ENCODE measurements at regions of chr5 and their contacts with region 1.

Region 1: GRCh38 chr5:79133657-79134451 is 22.2 kb downstream of the BHMT start:
- DNase-seq: peak; percentile 66
- ATAC-seq: peak; percentile 58
- H3K4me3 ChIP-seq: peak overlapping the region in 1 of 5 experiments; percentile 0
- H3K4me3 Mint-ChIP-seq: no peak overlapping the region
- H3K27ac ChIP-seq: no peak overlapping the region
- H3K27ac Mint-ChIP-seq: no peak overlapping the region
- H3K4me1 ChIP-seq: peaks cover 7 to 10% of the 10 kb centered on the region in 2 donors
- H3K4me1 Mint-ChIP-seq: peaks cover 8% of the 10 kb centered on the region
- H3K27me3 ChIP-seq: peaks cover 0 to 3% (median 0%) of the 10 kb centered on the region in 4 experiments
- H3K27me3 Mint-ChIP-seq: peaks cover 8% of the 10 kb centered on the region
- CTCF ChIP-seq: peak; percentile 66

Region 2: DNA sequence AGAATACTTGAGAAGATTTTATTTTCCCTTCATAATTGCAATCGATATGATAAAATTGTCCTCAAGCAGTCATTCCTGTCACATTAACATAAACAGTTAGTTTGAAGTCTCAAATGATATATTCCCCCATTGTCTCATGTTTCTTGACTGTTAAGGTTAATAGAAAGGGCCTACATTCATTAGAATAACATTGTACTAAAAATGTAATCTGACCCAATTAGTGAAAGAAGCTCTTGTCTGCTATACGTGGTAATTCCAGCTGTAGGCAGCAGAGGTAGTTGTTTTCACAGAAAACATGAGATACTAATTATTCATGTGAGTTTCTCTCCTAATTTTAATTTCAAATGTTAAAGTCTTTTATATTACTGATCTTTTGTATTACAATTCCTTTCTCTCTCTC is 813.5 kb before region 1 on chr5:
- CTCF ChIA-PET with region 1: interaction called, 11 read pairs
- POLR2A ChIA-PET with region 1: no interaction called
- intact Hi-C with region 1: no loop called
- DNase-seq: peak; percentile 20
- ATAC-seq: no peak
- H3K4me3 ChIP-seq: no peak overlapping the region
- H3K4me3 Mint-ChIP-seq: no peak overlapping the region
- H3K27ac ChIP-seq: no peak overlapping the region
- H3K27ac Mint-ChIP-seq: no peak overlapping the region
- H3K4me1 ChIP-seq: no peaks in the 10 kb centered on the region
- H3K4me1 Mint-ChIP-seq: no peaks in the 10 kb centered on the region
- H3K27me3 ChIP-seq: no peaks in the 10 kb centered on the region
- H3K27me3 Mint-ChIP-seq: no peaks in the 10 kb centered on the region
- CTCF ChIP-seq: peak; percentile 49

Region 3: GRCh38 chr5:78537821-78538220 is 596.0 kb before region 1 on chr5:
- CTCF ChIA-PET with region 1: interaction called, 15 read pairs
- POLR2A ChIA-PET with region 1: no interaction called
- intact Hi-C with region 1: loop called (anchors 1 kb)
- DNase-seq: peak; percentile 65
- ATAC-seq: peak; percentile 75
- H3K4me3 ChIP-seq: no peak overlapping the region
- H3K4me3 Mint-ChIP-seq: no peak overlapping the region
- H3K27ac ChIP-seq: no peak overlapping the region
- H3K27ac Mint-ChIP-seq: no peak overlapping the region
- H3K4me1 ChIP-seq: peaks cover 0 to 3% of the 10 kb centered on the region in 2 donors
- H3K4me1 Mint-ChIP-seq: peaks cover 6% of the 10 kb centered on the region
- H3K27me3 ChIP-seq: no peaks in the 10 kb centered on the region
- H3K27me3 Mint-ChIP-seq: no peaks in the 10 kb centered on the region
- CTCF ChIP-seq: peak; percentile 63

Region 4: GRCh38 chr5:79109527-79110492 is 24.0 kb before region 1 on chr5:
- CTCF ChIA-PET with region 1: interaction called, 12 read pairs
- POLR2A ChIA-PET with region 1: no interaction called
- intact Hi-C with region 1: no loop called
- DNase-seq: peak; percentile 26
- ATAC-seq: peak; percentile 33
- H3K4me3 ChIP-seq: no peak overlapping the region
- H3K4me3 Mint-ChIP-seq: no peak overlapping the region
- H3K27ac ChIP-seq: no peak overlapping the region
- H3K27ac Mint-ChIP-seq: no peak overlapping the region
- H3K4me1 ChIP-seq: no peaks in the 10 kb centered on the region
- H3K4me1 Mint-ChIP-seq: no peaks in the 10 kb centered on the region
- H3K27me3 ChIP-seq: peaks cover 0 to 41% (median 18%) of the 10 kb centered on the region in 4 experiments
- H3K27me3 Mint-ChIP-seq: peaks cover 63% of the 10 kb centered on the region
- CTCF ChIP-seq: peak; percentile 70

Region 5: GRCh38 chr5:79193640-79194039 is 59.8 kb after region 1 on chr5:
- CTCF ChIA-PET with region 1: no interaction called
- POLR2A ChIA-PET with region 1: no interaction called
- intact Hi-C with region 1: no loop called
- DNase-seq: no peak
- ATAC-seq: no peak
- H3K4me3 ChIP-seq: no peak overlapping the region
- H3K4me3 Mint-ChIP-seq: no peak overlapping the region
- H3K27ac ChIP-seq: no peak overlapping the region
- H3K27ac Mint-ChIP-seq: no peak overlapping the region
- H3K4me1 ChIP-seq: no peaks in the 10 kb centered on the region
- H3K4me1 Mint-ChIP-seq: no peaks in the 10 kb centered on the region
- H3K27me3 ChIP-seq: no peaks in the 10 kb centered on the region
- H3K27me3 Mint-ChIP-seq: no peaks in the 10 kb centered on the region
- CTCF ChIP-seq: no peak

Region 6: GRCh38 chr5:79448336-79448735 is 314.5 kb after region 1 on chr5:
- CTCF ChIA-PET with region 1: no interaction called
- POLR2A ChIA-PET with region 1: no interaction called
- intact Hi-C with region 1: no loop called
- DNase-seq: no peak
- ATAC-seq: no peak
- H3K4me3 ChIP-seq: no peak overlapping the region
- H3K4me3 Mint-ChIP-seq: no peak overlapping the region
- H3K27ac ChIP-seq: no peak overlapping the region
- H3K27ac Mint-ChIP-seq: no peak overlapping the region
- H3K4me1 ChIP-seq: no peaks in the 10 kb centered on the region
- H3K4me1 Mint-ChIP-seq: no peaks in the 10 kb centered on the region
- H3K27me3 ChIP-seq: no peaks in the 10 kb centered on the region
- H3K27me3 Mint-ChIP-seq: no peaks in the 10 kb centered on the region
- CTCF ChIP-seq: no peak

Region 7: DNA sequence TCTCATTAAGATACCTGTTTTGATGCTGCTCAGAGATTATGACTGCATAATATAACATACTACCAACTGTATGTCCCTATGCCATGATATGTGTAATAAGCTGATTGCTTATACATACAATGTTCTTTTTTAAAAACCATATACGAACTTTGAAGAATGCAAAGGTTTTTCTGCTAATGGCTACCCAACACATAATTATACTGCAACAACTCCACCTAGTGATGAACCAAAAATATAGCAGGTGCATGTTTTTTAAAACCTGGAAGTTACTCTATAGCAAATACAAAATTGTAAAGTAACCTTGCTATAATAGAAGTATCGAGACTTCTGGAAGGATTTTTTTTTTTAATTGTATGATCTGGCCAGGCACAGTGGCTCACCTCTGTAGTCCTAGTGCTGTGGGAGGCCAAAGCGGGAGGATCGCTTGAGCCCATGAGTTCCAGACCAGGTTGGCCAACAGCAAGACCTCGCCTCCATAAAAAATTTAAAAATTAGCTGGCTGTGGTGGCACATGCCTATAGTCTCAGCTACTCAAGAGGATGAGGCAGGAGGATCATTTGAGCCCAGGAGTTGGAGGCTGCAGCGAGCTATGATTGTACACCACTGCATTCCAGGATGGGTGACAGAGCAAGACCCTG is 331.0 kb after region 1 on chr5:
- CTCF ChIA-PET with region 1: interaction called, 33 read pairs
- POLR2A ChIA-PET with region 1: no interaction called
- intact Hi-C with region 1: no loop called
- DNase-seq: peak; percentile 27
- ATAC-seq: no peak
- H3K4me3 ChIP-seq: no peak overlapping the region
- H3K4me3 Mint-ChIP-seq: no peak overlapping the region
- H3K27ac ChIP-seq: no peak overlapping the region
- H3K27ac Mint-ChIP-seq: no peak overlapping the region
- H3K4me1 ChIP-seq: no peaks in the 10 kb centered on the region
- H3K4me1 Mint-ChIP-seq: peaks cover 2% of the 10 kb centered on the region
- H3K27me3 ChIP-seq: no peaks in the 10 kb centered on the region
- H3K27me3 Mint-ChIP-seq: peaks cover 3% of the 10 kb centered on the region
- CTCF ChIP-seq: peak; percentile 72

Measured in B cell (primary cell).